OCI-LY7 (cell line): ENCODE measurements at regions of chr4 and their contacts with region 1.

Region 1: GRCh38 chr4:163663454-163664225 is 169.2 kb downstream of the TMA16 start:
- DNase-seq: peak; percentile 93
- H3K4me3 ChIP-seq: peak overlapping the region; percentile 50
- H3K27ac ChIP-seq: peak overlapping the region; percentile 99
- H3K4me1 ChIP-seq: peaks cover 69% of the 10 kb centered on the region
- CTCF ChIP-seq: peak; percentile 52

Region 2: GRCh38 chr4:163166041-163166579 is 497.5 kb before region 1 on chr4:
- CTCF ChIA-PET with region 1: no interaction called
- POLR2A ChIA-PET with region 1: no interaction called
- intact Hi-C with region 1: loop called (anchors 10 kb)
- DNase-seq: peak; percentile 64
- H3K4me3 ChIP-seq: peak overlapping the region; percentile 96
- H3K27ac ChIP-seq: peak overlapping the region; percentile 53
- H3K4me1 ChIP-seq: peaks cover 12% of the 10 kb centered on the region
- CTCF ChIP-seq: no peak

Region 3: GRCh38 chr4:163587867-163588266 is 75.8 kb before region 1 on chr4:
- CTCF ChIA-PET with region 1: interaction called, 8 read pairs
- POLR2A ChIA-PET with region 1: interaction called, 220 read pairs
- intact Hi-C with region 1: loop called (anchors 1 kb)
- DNase-seq: peak; percentile 87
- H3K4me3 ChIP-seq: peak overlapping the region; percentile 17
- H3K27ac ChIP-seq: peak overlapping the region; percentile 64
- H3K4me1 ChIP-seq: peaks cover 58% of the 10 kb centered on the region
- CTCF ChIP-seq: peak; percentile 92

Region 4: GRCh38 chr4:163624727-163625126 is 38.9 kb before region 1 on chr4:
- CTCF ChIA-PET with region 1: no interaction called
- POLR2A ChIA-PET with region 1: interaction called, 11 read pairs
- intact Hi-C with region 1: no loop called
- DNase-seq: no peak
- H3K4me3 ChIP-seq: no peak overlapping the region
- H3K27ac ChIP-seq: no peak overlapping the region
- H3K4me1 ChIP-seq: no peaks in the 10 kb centered on the region
- CTCF ChIP-seq: no peak

Region 5: GRCh38 chr4:163673848-163674697 is 10.4 kb after region 1 on chr4:
- CTCF ChIA-PET with region 1: interaction called, 9 read pairs
- POLR2A ChIA-PET with region 1: interaction called, 45 read pairs
- intact Hi-C with region 1: no loop called
- DNase-seq: peak; percentile 67
- H3K4me3 ChIP-seq: peak overlapping the region; percentile 5
- H3K27ac ChIP-seq: peak overlapping the region; percentile 46
- H3K4me1 ChIP-seq: peaks cover 20% of the 10 kb centered on the region
- CTCF ChIP-seq: no peak

Region 6: GRCh38 chr4:164956766-164957643 is 1293.4 kb after region 1 on chr4:
- CTCF ChIA-PET with region 1: no interaction called
- POLR2A ChIA-PET with region 1: no interaction called
- intact Hi-C with region 1: loop called (anchors 10 kb)
- DNase-seq: peak; percentile 93
- H3K4me3 ChIP-seq: peak overlapping the region; percentile 86
- H3K27ac ChIP-seq: peak overlapping the region; percentile 56
- H3K4me1 ChIP-seq: peaks cover 35% of the 10 kb centered on the region
- CTCF ChIP-seq: peak; percentile 24; the same call in 1 of the 2 replicates